ENCODE measurements at regions of chr3 and their contacts with region 1.

Region 1: GRCh38 chr3:142578327-142579223 is at the start of gene ATR:
- DNase-seq: peak; percentile 95 to 96
- ATAC-seq: peak; percentile 98 to 99
- H3K4me3 ChIP-seq: peak within 1 kb of the TSS; percentile 76 to 98 (median 86)
- H3K27ac ChIP-seq: peak within 1 kb of the TSS; percentile 86 to 91 (median 88)
- H3K4me1 ChIP-seq: peaks cover 14 to 19% of the 10 kb centered on the region in 2 donors
- H3K27me3 ChIP-seq: no peaks in the 10 kb centered on the region
- CTCF ChIP-seq: peak in 2 of 5 experiments; percentile 14 to 19
- POLR2A ChIP-seq: peak; percentile 45 to 70
- total RNA-seq, gene ATR: 8.9 to 21.9 (median 10.0) TPM

Region 2: GRCh38 chr3:142723968-142724681 is 145.6 kb after region 1 on chr3 and contains the start of gene TRPC1:
- in situ Hi-C with region 1: no loop called
- intact Hi-C with region 1: loop called (anchors 5 kb)
- DNase-seq: peak; percentile 45 to 51
- ATAC-seq: peak; percentile 92 to 96
- H3K4me3 ChIP-seq: peak within 1 kb of the TSS; percentile 66 to 71 (median 68)
- H3K27ac ChIP-seq: peak within 1 kb of the TSS; percentile 57 to 82 (median 76)
- H3K4me1 ChIP-seq: peaks cover 2 to 6% of the 10 kb centered on the region in 2 donors
- H3K27me3 ChIP-seq: peaks cover 0 to 24% (median 7%) of the 10 kb centered on the region in 3 donors
- CTCF ChIP-seq: no peak
- POLR2A ChIP-seq: peak; percentile 55 to 71
- total RNA-seq, gene TRPC1: 0.75 to 1.7 (median 1.1) TPM

Region 3: DNA sequence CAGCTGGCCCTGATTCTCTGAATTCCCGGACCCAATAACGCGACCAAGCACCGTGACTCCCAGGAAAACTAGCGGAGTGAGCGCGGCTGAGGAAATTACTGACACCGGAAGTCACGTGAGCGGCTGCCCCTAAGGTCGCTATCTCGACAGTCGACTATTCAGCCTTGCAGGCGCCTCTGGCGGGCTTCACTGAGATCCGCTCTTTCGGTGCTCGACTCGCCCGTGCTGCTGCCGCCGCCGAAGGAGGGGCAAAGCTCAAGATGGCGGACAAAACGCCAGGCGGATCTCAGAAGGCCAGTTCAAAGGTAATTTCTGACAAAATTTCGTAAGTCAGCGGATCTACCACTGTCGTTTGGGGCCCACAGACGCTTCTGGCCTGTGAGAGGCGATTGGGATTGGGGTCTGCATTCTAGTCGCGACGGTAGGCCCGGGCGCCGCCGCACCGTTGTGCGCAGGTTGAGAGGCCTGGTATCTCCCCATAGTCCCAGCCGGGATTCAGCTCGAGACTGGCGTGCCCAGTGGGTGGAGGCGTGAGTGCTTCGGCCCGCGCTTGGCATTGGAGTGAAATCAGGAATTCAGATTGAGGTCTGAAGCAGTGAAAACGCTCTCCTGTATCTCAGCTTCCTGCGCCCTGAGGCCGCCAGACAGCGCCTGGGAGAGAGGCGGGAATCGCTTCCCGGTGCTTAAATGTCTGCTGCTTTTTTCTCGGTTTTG is 423.0 kb after region 1 on chr3 and contains the start of gene U2SURP:
- in situ Hi-C with region 1: loop called in 2 of 4 experiments (anchors 10 to 25 kb)
- intact Hi-C with region 1: loop called (anchors 5 kb)
- DNase-seq: peak; percentile 95 to 96
- ATAC-seq: peak; percentile 92 to 94
- H3K4me3 ChIP-seq: peak within 1 kb of the TSS; percentile 65 to 95 (median 87)
- H3K27ac ChIP-seq: peak within 1 kb of the TSS; percentile 92 to 95 (median 94)
- H3K4me1 ChIP-seq: peaks cover 49 to 53% of the 10 kb centered on the region in 2 donors
- H3K27me3 ChIP-seq: no peaks in the 10 kb centered on the region
- CTCF ChIP-seq: peak in 1 of 5 experiments; percentile 26
- POLR2A ChIP-seq: peak; percentile 80 to 82
- total RNA-seq, gene U2SURP: 43.2 to 63.7 (median 43.9) TPM